ENCODE measurements at regions of chr2 and their contacts with region 1.

Region 1: DNA sequence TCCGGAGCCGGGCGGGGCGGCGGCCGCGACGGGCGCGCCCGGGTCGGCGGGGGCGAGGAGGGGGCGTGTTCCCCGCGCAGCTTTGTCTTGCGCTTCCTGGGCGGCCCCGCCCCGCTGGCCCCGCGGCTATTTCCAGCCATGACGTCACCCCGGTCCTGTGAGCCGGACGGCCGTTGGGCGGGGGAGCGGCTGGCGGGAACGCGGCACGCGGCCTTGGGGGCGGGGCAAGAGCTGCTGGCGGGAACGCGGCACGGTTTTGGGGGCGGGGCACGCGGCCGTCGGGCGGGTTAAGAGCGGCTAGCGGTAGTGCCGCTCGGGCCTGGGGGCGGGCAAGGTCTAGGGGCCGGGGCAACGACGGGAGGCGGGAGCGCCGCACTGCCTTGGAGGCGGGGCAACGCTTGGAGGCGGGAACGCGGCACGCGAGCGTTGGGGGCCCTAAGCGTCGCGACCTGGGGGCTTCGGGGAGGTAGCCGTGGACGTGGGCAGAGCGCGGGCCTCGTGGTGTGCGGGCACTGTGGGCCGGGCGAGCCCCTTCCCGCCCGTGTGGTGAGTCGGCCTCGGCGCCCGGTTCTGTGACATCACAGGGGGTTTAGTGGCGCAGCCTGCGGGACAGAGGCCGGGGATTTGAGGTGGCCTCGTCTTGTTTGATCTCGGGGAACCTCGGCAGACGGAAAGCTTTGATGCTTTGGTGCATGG is 704 bp downstream of the KLF11 start:
- DNase-seq: peak; percentile 78 to 94 (median 87)
- ATAC-seq: peak; percentile 67 to 75 (median 70)
- H3K4me3 ChIP-seq: peak overlapping the region; percentile 42 to 49
- H3K4me3 Mint-ChIP-seq: peak overlapping the region; percentile 68 to 83 (median 76)
- H3K27ac ChIP-seq: peak overlapping the region; percentile 73
- H3K27ac Mint-ChIP-seq: peak overlapping the region; percentile 44 to 68
- H3K4me1 ChIP-seq: peaks cover 0 to 36% of the 10 kb centered on the region in 2 experiments
- H3K4me1 Mint-ChIP-seq: peaks cover 18 to 37% (median 27%) of the 10 kb centered on the region in 3 donors
- H3K27me3 ChIP-seq: peaks cover 0 to 9% of the 10 kb centered on the region in 2 experiments
- H3K27me3 Mint-ChIP-seq: no peaks in the 10 kb centered on the region

Region 2: DNA sequence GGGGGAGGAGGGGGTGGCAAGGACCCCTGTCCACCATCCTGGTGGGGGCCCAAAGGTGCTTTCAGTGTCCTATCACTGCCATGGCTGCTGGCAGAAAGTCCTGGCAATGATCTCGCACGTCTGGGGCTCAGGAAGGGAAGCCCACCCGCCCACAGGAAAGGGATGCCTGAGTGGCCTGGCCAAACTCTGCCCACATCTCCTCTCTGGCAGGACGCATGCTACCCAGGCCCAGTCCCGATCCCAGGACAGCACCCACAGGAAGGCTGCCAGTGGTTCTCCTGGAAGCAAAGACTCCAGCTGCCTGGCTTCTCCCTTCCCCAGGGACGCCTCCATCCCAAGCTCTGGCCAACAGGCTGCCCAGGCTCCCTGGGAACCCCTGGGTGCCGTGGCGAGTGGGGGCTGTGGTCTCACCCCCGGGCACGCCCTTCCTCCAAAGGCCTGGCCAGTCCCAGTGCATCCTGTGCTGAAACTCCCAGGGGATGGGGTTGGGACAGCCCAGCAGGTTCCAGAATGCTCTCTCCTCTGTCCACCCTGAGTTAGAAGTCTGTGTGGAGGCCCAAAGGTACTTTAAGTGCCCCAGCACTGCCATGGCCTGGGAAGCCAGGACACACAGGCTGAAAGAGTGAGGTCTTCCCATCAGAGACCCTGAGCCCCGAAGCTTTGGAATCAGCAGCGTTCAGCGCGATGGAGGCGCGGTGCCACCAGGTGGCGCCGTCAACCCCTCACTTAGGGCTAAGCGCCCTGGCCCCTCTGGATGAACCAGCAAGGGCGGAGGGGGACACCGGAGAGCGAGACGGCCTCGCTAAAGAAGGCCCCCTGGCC is 230.5 kb before region 1 on chr2:
- CTCF ChIA-PET with region 1: interaction called, 16 to 28 read pairs
- POLR2A ChIA-PET with region 1: no interaction called
- DNase-seq: peak; percentile 16 to 81 (median 55)
- ATAC-seq: peak; percentile 72 to 86 (median 81)
- H3K4me3 ChIP-seq: no peak overlapping the region
- H3K4me3 Mint-ChIP-seq: no peak overlapping the region
- H3K27ac ChIP-seq: no peak overlapping the region
- H3K27ac Mint-ChIP-seq: no peak overlapping the region
- H3K4me1 ChIP-seq: peaks cover 0 to 20% of the 10 kb centered on the region in 2 experiments
- H3K4me1 Mint-ChIP-seq: peaks cover 11 to 25% (median 19%) of the 10 kb centered on the region in 3 donors
- H3K27me3 ChIP-seq: peaks cover 0 to 24% of the 10 kb centered on the region in 2 experiments
- H3K27me3 Mint-ChIP-seq: peaks cover 0 to 8% of the 10 kb centered on the region in 2 donors

Region 3: DNA sequence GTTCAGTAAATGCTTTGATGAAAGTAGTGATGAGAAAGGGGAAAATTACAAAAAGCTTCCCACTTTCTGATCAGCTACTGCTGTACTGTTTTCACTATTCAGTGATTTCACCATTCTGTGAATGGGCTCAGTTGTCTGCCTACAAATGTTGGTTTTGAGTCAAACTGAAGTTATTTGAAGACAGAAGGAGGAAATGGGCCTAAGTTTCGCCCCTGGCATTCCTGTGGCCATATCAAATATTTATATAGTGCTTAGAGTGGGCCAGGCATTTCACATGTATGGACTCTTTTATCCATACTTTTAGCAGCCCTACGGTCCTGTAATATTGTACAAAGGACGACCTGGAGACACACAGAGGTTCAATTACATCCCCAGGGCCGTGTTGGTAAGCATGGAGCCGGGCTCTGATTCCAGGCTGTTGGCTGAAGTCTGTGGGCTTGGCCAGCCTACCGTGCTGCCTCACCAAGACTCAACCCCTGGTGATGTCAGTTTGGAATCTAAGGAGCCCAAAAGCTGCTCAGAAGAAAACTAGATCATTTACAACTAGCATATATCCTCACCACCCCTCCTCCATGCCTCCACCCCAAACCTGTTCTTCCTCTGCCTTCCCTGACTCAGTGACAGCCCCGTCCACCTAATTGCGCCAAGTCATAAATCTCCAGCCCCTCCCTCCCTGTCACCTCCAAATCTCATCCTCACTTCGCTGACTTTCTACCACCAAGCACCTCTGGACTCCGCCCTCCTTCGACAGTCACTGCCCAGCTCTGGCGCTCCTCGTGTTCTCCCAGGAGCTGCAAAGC is 102.7 kb before region 1 on chr2:
- CTCF ChIA-PET with region 1: no interaction called
- POLR2A ChIA-PET with region 1: no interaction called
- DNase-seq: no peak
- ATAC-seq: no peak
- H3K4me3 ChIP-seq: no peak overlapping the region
- H3K4me3 Mint-ChIP-seq: no peak overlapping the region
- H3K27ac ChIP-seq: no peak overlapping the region
- H3K27ac Mint-ChIP-seq: no peak overlapping the region
- H3K4me1 ChIP-seq: no peaks in the 10 kb centered on the region
- H3K4me1 Mint-ChIP-seq: peaks cover 0 to 4% (median 0%) of the 10 kb centered on the region in 3 donors
- H3K27me3 ChIP-seq: peaks cover 0 to 20% of the 10 kb centered on the region in 2 experiments
- H3K27me3 Mint-ChIP-seq: peaks cover 8 to 22% of the 10 kb centered on the region in 2 donors

Region 4: GRCh38 chr2:10079234-10079869 is 35.3 kb after region 1 on chr2:
- CTCF ChIA-PET with region 1: no interaction called
- POLR2A ChIA-PET with region 1: interaction called in 1 of 2 experiments, 12 read pairs
- DNase-seq: peak in 6 of 35 experiments; percentile 4 to 34 (median 14)
- ATAC-seq: peak; percentile 62 to 69 (median 66)
- H3K4me3 ChIP-seq: peak overlapping the region in 1 of 2 donors; percentile 2
- H3K4me3 Mint-ChIP-seq: peak overlapping the region; percentile 66 to 86 (median 79)
- H3K27ac ChIP-seq: no peak overlapping the region
- H3K27ac Mint-ChIP-seq: no peak overlapping the region
- H3K4me1 ChIP-seq: peaks cover 7 to 28% of the 10 kb centered on the region in 2 experiments
- H3K4me1 Mint-ChIP-seq: peaks cover 13 to 18% (median 14%) of the 10 kb centered on the region in 3 donors
- H3K27me3 ChIP-seq: peaks cover 11 to 81% of the 10 kb centered on the region in 2 experiments
- H3K27me3 Mint-ChIP-seq: peaks cover 58 to 82% of the 10 kb centered on the region in 2 donors

Region 5: GRCh38 chr2:10193851-10194820 is 150.1 kb after region 1 on chr2:
- CTCF ChIA-PET with region 1: no interaction called
- POLR2A ChIA-PET with region 1: no interaction called
- DNase-seq: no peak
- ATAC-seq: no peak
- H3K4me3 ChIP-seq: no peak overlapping the region
- H3K4me3 Mint-ChIP-seq: no peak overlapping the region
- H3K27ac ChIP-seq: no peak overlapping the region
- H3K27ac Mint-ChIP-seq: no peak overlapping the region
- H3K4me1 ChIP-seq: no peaks in the 10 kb centered on the region
- H3K4me1 Mint-ChIP-seq: no peaks in the 10 kb centered on the region
- H3K27me3 ChIP-seq: no peaks in the 10 kb centered on the region
- H3K27me3 Mint-ChIP-seq: no peaks in the 10 kb centered on the region

Region 6: DNA sequence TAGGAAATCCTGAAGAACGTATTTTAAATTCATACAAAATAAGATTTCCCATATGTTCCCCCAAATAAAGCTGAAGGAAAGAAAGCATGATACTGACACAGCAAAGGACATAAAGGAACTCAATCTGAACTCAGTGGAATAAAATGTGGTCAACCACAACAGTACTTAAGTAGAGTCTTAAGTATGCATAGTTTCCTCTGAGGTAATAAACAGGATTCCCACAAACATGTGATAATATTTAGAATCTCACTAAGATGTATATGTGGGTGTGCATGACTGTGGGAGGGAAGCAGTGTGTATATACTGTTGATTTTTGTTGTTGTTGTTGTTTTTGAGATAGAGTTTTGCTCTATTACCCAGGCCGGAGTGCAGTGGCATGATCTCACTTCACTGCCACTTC is 576.4 kb after region 1 on chr2:
- CTCF ChIA-PET with region 1: no interaction called
- POLR2A ChIA-PET with region 1: no interaction called
- DNase-seq: peak in 1 of 35 experiments; percentile 49
- ATAC-seq: peak; percentile 63 to 86 (median 84)
- H3K4me3 ChIP-seq: no peak overlapping the region
- H3K4me3 Mint-ChIP-seq: peak overlapping the region in 2 of 3 donors; percentile 6 to 15
- H3K27ac ChIP-seq: no peak overlapping the region
- H3K27ac Mint-ChIP-seq: peak overlapping the region in 1 of 2 donors; percentile 31
- H3K4me1 ChIP-seq: peaks cover 7 to 14% of the 10 kb centered on the region in 2 experiments
- H3K4me1 Mint-ChIP-seq: peaks cover 35 to 43% (median 40%) of the 10 kb centered on the region in 3 donors
- H3K27me3 ChIP-seq: no peaks in the 10 kb centered on the region
- H3K27me3 Mint-ChIP-seq: no peaks in the 10 kb centered on the region